Upper lobe of right lung (tissue), 1 donor: ENCODE measurements at regions of chr13 and their contacts with region 1.

Region 1: DNA sequence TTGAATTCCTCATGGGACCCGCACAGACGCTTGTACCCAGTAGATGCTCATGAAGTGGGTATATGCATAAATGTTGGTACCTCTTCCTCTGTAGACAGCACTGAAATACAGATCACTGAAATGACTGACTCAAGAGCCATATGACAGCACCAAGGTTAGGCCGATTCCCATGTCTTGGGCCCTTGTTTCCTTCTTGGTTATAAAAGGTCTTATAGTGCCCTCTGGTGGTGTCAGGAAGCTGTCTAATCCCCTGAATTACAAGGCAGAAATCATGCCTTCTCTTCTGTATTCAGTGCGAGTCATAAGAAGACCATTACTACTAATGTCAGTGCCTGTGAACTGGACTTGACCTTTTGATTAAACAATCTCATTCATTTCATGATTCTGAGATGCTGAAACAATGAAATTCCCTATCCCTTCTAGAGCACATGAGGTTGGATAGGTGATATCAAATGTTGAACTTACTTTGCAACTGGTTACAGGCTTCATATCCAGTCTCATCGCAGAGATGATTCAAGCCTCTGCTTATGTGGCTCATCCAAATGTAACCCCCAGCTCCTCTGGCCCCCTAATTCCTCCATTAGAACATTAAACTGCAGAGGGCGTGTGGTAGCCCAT is 59.7 kb downstream of the SPATA13 start:
- DNase-seq: no peak
- ATAC-seq: peak; percentile 85
- H3K4me3 ChIP-seq: no peak overlapping the region
- H3K27ac ChIP-seq: no peak overlapping the region
- H3K4me1 ChIP-seq: peaks cover 11% of the 10 kb centered on the region
- H3K27me3 ChIP-seq: no peaks in the 10 kb centered on the region
- CTCF ChIP-seq: peak; percentile 80

Region 2: GRCh38 chr13:23921451-23921888 is 298.7 kb before region 1 on chr13:
- intact Hi-C with region 1: loop called (anchors 10 kb)
- DNase-seq: no peak
- ATAC-seq: peak; percentile 87
- H3K4me3 ChIP-seq: no peak overlapping the region
- H3K27ac ChIP-seq: no peak overlapping the region
- H3K4me1 ChIP-seq: peaks cover 5% of the 10 kb centered on the region
- H3K27me3 ChIP-seq: no peaks in the 10 kb centered on the region
- CTCF ChIP-seq: peak; percentile 75

Region 3: GRCh38 chr13:24016046-24016445 is 204.1 kb before region 1 on chr13:
- intact Hi-C with region 1: loop called (anchors 5 kb)
- DNase-seq: no peak
- ATAC-seq: no peak
- H3K4me3 ChIP-seq: no peak overlapping the region
- H3K27ac ChIP-seq: no peak overlapping the region
- H3K4me1 ChIP-seq: peaks cover 3% of the 10 kb centered on the region
- H3K27me3 ChIP-seq: no peaks in the 10 kb centered on the region
- CTCF ChIP-seq: no peak

Region 4: GRCh38 chr13:24053519-24054251 is 166.5 kb before region 1 on chr13:
- intact Hi-C with region 1: loop called (anchors 10 kb)
- DNase-seq: no peak
- ATAC-seq: peak; percentile 92
- H3K4me3 ChIP-seq: no peak overlapping the region
- H3K27ac ChIP-seq: peak overlapping the region; percentile 32
- H3K4me1 ChIP-seq: peaks cover 26% of the 10 kb centered on the region
- H3K27me3 ChIP-seq: no peaks in the 10 kb centered on the region
- CTCF ChIP-seq: peak; percentile 77